OCI-LY7 (cell line): ENCODE measurements at regions of chr9 and their contacts with region 1.

Region 1: GRCh38 chr9:121808781-121809180 is 157.3 kb downstream of the DAB2IP start:
- DNase-seq: no peak
- H3K4me3 ChIP-seq: no peak overlapping the region
- H3K27ac ChIP-seq: no peak overlapping the region
- H3K4me1 ChIP-seq: no peaks in the 10 kb centered on the region
- CTCF ChIP-seq: no peak

Region 2: DNA sequence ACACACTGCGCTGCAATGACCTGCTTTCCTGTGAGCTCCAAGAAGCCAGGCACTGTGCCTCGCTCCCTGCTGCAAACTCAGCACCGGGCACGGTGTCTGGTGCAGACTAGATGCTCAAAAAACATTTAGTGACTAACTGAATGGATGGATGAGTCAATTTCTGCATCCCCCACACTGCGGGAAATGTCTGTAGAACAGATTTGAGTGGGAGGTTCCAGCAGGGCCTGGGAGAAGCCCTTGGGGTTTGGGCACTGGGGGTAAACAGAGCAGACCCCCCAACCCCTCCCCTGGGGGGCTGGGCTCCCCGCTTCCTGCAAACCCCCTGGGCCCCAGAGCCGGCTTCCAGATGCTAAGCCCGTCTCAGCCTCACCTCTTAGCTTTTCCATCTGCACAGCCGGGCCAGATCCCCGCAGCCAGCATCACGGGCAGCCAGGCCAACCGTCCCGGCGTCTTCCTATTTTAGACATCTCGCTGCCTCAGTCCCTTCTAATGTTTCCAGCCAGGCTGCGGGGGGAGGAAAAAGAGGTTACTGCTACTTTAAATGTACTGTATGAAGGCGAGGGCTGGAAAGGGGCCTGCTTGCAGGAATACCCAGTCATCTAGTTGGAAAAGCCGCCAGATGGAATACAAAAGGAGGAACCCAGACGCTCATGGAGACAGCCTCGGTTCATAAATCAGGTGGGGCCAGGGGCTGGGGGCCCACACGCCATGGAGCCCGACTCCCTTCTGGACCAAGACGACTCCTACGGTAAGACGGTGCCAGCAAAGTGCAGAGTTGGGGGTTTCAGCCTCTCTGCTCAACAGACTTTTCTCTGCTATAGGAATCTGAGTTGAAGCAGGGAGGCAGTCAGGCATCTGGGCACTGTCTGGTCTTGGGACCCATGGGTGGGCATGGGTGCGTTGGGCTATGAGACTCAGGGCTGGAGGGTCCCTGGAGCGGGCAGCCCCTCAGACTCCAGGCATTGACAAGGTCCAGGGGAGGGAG is 242.0 kb before region 1 on chr9:
- CTCF ChIA-PET with region 1: no interaction called
- POLR2A ChIA-PET with region 1: no interaction called
- intact Hi-C with region 1: no loop called
- DNase-seq: no peak
- H3K4me3 ChIP-seq: no peak overlapping the region
- H3K27ac ChIP-seq: no peak overlapping the region
- H3K4me1 ChIP-seq: no peaks in the 10 kb centered on the region
- CTCF ChIP-seq: no peak

Region 3: GRCh38 chr9:121621113-121621449 is 187.7 kb before region 1 on chr9:
- CTCF ChIA-PET with region 1: interaction called, 35 read pairs
- POLR2A ChIA-PET with region 1: no interaction called
- intact Hi-C with region 1: no loop called
- DNase-seq: peak; percentile 57
- H3K4me3 ChIP-seq: no peak overlapping the region
- H3K27ac ChIP-seq: no peak overlapping the region
- H3K4me1 ChIP-seq: no peaks in the 10 kb centered on the region
- CTCF ChIP-seq: peak; percentile 76

Region 4: GRCh38 chr9:121640076-121640475 is 168.7 kb before region 1 on chr9:
- CTCF ChIA-PET with region 1: no interaction called
- POLR2A ChIA-PET with region 1: no interaction called
- intact Hi-C with region 1: no loop called
- DNase-seq: peak; percentile 61
- H3K4me3 ChIP-seq: no peak overlapping the region
- H3K27ac ChIP-seq: no peak overlapping the region
- H3K4me1 ChIP-seq: no peaks in the 10 kb centered on the region
- CTCF ChIP-seq: peak; percentile 78